ENCODE measurements at regions of chr5 and their contacts with region 1.

Region 1: GRCh38 chr5:178075840-178076548 is 37.3 kb upstream of the N4BP3 start:
- DNase-seq: peak; percentile 51
- ATAC-seq: peak; percentile 71
- H3K4me3 ChIP-seq: no peak overlapping the region
- H3K27ac ChIP-seq: no peak overlapping the region
- H3K4me1 ChIP-seq: peaks cover 5% of the 10 kb centered on the region; the same call in 1 of the 2 replicates
- H3K27me3 ChIP-seq: peaks cover 33% of the 10 kb centered on the region
- CTCF ChIP-seq: peak; percentile 76
- POLR2A ChIP-seq: no peak
- RAD21 ChIP-seq: peak; percentile 79

Region 2: GRCh38 chr5:178104492-178104891 is 28.5 kb after region 1 on chr5:
- CTCF ChIA-PET with region 1: interaction called, 12 read pairs
- POLR2A ChIA-PET with region 1: no interaction called
- dilution Hi-C with region 1: no loop called
- in situ Hi-C with region 1: no loop called
- intact Hi-C with region 1: no loop called
- DNase-seq: no peak
- ATAC-seq: no peak
- H3K4me3 ChIP-seq: no peak overlapping the region
- H3K27ac ChIP-seq: no peak overlapping the region
- H3K4me1 ChIP-seq: no peaks in the 10 kb centered on the region
- H3K27me3 ChIP-seq: peaks cover 20% of the 10 kb centered on the region
- CTCF ChIP-seq: no peak
- POLR2A ChIP-seq: no peak
- RAD21 ChIP-seq: no peak

Region 3: DNA sequence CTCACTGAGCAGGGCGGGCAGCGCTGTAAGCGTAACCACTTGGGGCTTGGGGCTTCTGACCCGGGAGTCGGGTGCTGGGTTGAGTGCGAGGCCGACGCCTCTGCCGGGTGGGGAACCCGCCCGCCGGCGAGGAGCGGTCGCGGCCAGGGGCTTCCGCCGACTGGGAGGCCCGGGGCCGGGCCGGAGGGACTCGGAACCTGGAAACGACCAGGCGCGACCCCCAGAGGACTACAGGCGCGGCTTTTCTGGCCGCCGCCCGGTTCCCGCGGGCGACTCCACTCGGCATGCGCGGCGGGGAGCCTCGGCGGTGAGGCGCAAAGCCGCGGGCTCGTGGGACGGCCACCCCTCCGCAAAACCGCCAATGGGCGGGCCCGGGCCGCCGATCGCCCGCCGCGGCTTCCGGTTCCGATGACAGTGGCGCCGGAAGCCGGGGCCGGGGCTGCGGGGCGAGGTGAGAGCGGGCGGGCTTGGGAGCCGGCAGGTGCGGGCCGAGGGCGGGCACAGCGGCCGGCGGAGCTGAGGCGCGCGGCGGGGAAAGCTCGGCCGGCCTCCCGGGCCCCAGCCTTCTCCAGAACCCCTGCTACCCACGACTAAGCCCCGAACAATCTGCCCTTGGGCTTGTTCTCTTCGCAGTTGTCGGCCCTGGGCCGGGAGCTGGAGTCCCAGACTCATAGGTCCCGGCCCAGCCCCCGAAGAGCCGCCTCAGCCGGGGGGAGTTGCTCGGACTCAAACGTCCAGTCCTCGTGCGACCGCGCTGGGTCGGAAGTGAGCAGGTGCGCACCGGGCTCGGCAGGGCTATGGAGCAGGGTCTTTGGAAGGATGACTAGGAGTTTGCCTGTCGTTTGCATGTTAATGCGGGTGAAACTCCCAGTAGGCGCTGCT is 54.9 kb after region 1 on chr5 and contains the start of gene RMND5B:
- CTCF ChIA-PET with region 1: interaction called, 3 read pairs
- POLR2A ChIA-PET with region 1: interaction called, 4 read pairs
- dilution Hi-C with region 1: no loop called
- in situ Hi-C with region 1: no loop called
- intact Hi-C with region 1: loop called (anchors 5 kb)
- DNase-seq: peak; percentile 67
- ATAC-seq: peak; percentile 97
- H3K4me3 ChIP-seq: peak within 1 kb of the TSS; percentile 66
- H3K27ac ChIP-seq: peak within 1 kb of the TSS; percentile 75
- H3K4me1 ChIP-seq: peaks cover 5% of the 10 kb centered on the region; the same call in 1 of the 2 replicates
- H3K27me3 ChIP-seq: no peaks in the 10 kb centered on the region; the same call in none of the 2 replicates
- CTCF ChIP-seq: no peak
- POLR2A ChIP-seq: peak; percentile 62; the same call in 1 of the 2 replicates
- RAD21 ChIP-seq: no peak
- total RNA-seq, gene RMND5B: 11.7 and 14.0 TPM in 2 replicates

Region 4: GRCh38 chr5:178146020-178146820 is 70.2 kb after region 1 on chr5:
- CTCF ChIA-PET with region 1: no interaction called
- POLR2A ChIA-PET with region 1: interaction called, 5 read pairs
- dilution Hi-C with region 1: no loop called
- in situ Hi-C with region 1: loop called (anchors 5 kb)
- intact Hi-C with region 1: loop called (anchors 1 kb)
- DNase-seq: peak; percentile 41
- ATAC-seq: peak; percentile 34
- H3K4me3 ChIP-seq: no peak overlapping the region
- H3K27ac ChIP-seq: no peak overlapping the region
- H3K4me1 ChIP-seq: peaks cover 3% of the 10 kb centered on the region; the same call in 1 of the 2 replicates
- H3K27me3 ChIP-seq: no peaks in the 10 kb centered on the region
- CTCF ChIP-seq: peak; percentile 57
- POLR2A ChIP-seq: no peak
- RAD21 ChIP-seq: peak; percentile 43

Region 5: DNA sequence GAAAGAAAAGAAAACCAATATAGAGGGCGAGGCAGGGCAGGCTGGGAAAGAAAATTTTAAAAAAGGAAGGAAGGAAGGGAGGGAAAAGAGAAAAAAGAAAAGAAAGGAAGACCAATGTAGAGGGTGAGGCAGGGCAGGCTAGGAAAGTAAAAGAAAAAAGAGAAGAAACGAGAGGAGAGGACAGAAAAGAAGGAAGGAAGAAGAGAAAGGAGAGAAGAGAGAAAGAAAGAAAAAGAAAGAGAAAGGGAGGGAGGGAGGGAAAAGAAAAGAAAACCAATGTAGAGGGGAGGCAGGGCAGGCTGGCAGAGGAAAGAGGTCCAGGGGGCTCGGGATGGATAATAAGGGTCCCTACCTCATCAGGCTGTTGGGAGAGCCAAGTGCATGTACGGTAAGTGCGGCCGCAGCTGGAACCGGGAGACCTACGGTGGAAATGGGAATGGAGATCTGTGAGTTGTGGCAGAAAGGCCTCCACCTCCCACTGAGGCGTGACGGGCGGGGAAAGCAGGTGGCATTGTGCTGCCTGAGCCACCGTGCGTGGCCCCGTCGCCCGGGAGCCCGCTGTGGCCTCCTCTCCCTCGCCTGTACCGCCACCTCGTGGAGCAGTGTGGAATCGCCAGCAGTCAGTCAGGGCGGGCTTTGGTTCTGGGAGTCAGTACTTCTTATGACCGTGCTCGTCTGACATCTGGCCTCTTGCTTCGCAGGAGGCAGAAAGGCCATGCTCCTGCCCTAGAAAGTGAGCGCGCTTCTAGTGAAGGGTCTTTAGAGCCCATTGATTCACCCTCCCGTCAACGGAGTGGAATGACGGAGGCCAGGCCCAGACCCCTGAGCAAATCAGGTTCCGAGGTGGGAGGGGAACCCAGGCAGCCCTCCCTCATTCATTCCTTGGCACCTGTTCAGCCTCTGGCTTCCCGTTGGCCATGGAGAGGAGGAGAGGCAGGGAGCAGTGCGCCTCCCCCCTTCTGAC is 88.1 kb after region 1 on chr5:
- CTCF ChIA-PET with region 1: interaction called, 5 read pairs
- POLR2A ChIA-PET with region 1: no interaction called
- dilution Hi-C with region 1: no loop called
- in situ Hi-C with region 1: no loop called
- intact Hi-C with region 1: loop called (anchors 1 kb)
- DNase-seq: peak; percentile 52
- ATAC-seq: peak; percentile 100
- H3K4me3 ChIP-seq: no peak overlapping the region
- H3K27ac ChIP-seq: no peak overlapping the region
- H3K4me1 ChIP-seq: no peaks in the 10 kb centered on the region
- H3K27me3 ChIP-seq: peaks cover 37% of the 10 kb centered on the region
- CTCF ChIP-seq: peak; percentile 95
- POLR2A ChIP-seq: no peak
- RAD21 ChIP-seq: peak; percentile 95

Region 6: DNA sequence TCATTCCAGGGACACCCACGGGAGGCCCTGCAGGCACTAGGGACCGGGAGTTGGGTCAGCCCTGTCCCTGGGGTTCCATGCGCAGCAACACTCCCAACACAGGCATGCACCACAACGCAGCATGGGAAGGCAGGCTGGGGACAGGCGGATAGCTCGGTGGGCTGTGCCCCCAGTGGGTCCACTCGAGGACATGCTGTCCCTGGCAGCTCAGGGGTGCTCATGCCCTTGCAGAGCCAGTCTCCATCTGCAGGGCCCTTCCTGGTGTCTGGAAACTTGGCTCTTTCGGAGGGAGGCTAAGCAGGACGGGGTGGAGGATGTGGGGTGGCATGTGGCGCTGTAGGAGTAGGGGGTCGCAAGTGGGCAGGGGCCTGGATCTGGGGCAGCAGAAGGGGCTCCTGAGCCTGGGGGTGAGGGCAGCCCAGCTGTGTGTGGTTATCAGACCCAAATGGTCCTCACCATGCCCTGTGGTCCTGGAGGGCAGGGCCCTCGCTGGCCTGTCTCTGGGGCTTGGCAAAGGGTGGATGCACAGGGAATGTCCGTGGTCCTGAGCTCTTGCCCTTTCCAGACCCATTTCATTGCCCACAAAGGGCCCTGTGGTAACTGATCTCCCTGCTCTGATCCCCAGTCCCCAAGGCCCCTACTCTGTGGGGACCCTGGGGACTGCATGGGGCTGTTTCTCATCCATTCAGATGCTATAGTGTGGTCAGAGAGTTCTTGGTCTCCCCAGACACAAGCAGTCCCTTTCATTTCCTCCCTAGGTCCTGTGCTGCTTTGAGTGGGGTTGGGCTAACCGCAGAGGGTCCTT is 246.9 kb after region 1 on chr5:
- CTCF ChIA-PET with region 1: no interaction called
- POLR2A ChIA-PET with region 1: no interaction called
- dilution Hi-C with region 1: no loop called
- in situ Hi-C with region 1: no loop called
- intact Hi-C with region 1: no loop called
- DNase-seq: no peak
- ATAC-seq: no peak
- H3K4me3 ChIP-seq: no peak overlapping the region
- H3K27ac ChIP-seq: no peak overlapping the region
- H3K4me1 ChIP-seq: no peaks in the 10 kb centered on the region
- H3K27me3 ChIP-seq: no peaks in the 10 kb centered on the region; the same call in 1 of the 2 replicates
- CTCF ChIP-seq: no peak
- POLR2A ChIP-seq: no peak
- RAD21 ChIP-seq: no peak

Measured in IMR-90 (cell line).